Gastrocnemius medialis (tissue), 4 donors: ENCODE measurements at regions of chr12 and their contacts with region 1.

Region 1: DNA sequence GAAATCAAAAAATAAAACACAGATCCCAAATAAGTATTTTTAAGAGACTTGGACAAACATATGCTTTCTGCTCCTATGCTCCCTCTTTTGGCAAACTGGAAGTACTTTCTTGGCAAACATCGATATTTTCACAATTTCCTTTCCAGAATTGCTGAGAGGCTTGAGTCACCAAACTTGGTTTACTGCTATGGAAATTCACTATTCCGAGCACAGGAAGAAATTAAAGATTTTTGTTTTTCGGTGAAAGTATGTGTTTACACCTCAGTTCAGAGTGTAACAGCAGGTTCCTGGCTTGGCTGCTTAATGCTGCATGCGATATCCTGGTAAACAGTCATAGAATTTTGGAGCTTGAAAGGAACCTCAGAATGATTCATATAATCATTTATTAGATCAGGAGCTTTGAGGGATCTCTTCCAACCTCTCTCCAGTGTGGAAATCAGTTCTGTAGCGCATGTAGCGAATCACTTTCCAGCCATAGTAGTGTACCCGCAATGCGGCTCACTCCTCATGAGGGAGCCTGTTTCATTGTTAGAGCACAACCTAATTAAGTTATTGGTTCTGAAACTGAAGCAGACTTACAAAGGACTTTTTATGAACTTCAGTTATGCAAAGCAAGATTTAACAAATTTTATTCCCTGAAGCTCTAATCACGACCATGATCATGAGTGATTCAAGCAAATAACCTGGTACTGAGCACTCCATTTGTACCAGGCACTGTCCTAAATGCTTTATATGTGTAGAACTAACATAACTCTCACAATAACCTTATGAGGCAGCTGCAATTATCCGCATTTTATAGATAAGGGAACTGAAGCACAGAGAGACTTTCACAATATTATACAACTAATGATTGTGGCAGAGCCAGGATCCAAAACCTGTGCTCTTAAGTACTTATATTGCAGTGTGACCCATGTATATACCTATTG is 56.4 kb upstream of the ATP2A2 start:
- DNase-seq: peak; percentile 36 to 44
- ATAC-seq: peak; percentile 81 to 91
- H3K4me3 ChIP-seq: peak overlapping the region; percentile 4 to 34 (median 18)
- H3K27ac ChIP-seq: peak overlapping the region; percentile 75 to 82 (median 80)
- H3K4me1 ChIP-seq: peaks cover 25 to 41% of the 10 kb centered on the region in 2 donors
- H3K27me3 ChIP-seq: no peaks in the 10 kb centered on the region
- CTCF ChIP-seq: peak in 4 of 5 experiments; percentile 53 to 76 (median 62)
- POLR2A ChIP-seq: no peak

Region 2: GRCh38 chr12:110170535-110171185 is 54.0 kb before region 1 on chr12:
- in situ Hi-C with region 1: no loop called
- intact Hi-C with region 1: loop called (anchors 5 kb)
- DNase-seq: peak; percentile 40 to 59
- ATAC-seq: peak; percentile 97 to 98
- H3K4me3 ChIP-seq: no peak overlapping the region
- H3K27ac ChIP-seq: peak overlapping the region; percentile 73 to 82 (median 80)
- H3K4me1 ChIP-seq: peaks cover 30 to 37% of the 10 kb centered on the region in 2 donors
- H3K27me3 ChIP-seq: no peaks in the 10 kb centered on the region
- CTCF ChIP-seq: no peak
- POLR2A ChIP-seq: no peak

Region 3: GRCh38 chr12:110403146-110403975 is 178.7 kb after region 1 on chr12 and contains the start of gene ANAPC7:
- in situ Hi-C with region 1: no loop called
- intact Hi-C with region 1: no loop called
- DNase-seq: peak; percentile 81 to 90
- ATAC-seq: peak; percentile 96 to 97
- H3K4me3 ChIP-seq: peak within 1 kb of the TSS; percentile 76 to 98 (median 96)
- H3K27ac ChIP-seq: peak within 1 kb of the TSS; percentile 90 to 99 (median 92)
- H3K4me1 ChIP-seq: peaks cover 11 to 12% of the 10 kb centered on the region in 2 donors
- H3K27me3 ChIP-seq: no peaks in the 10 kb centered on the region
- CTCF ChIP-seq: no peak
- POLR2A ChIP-seq: peak; percentile 35 to 51
- total RNA-seq, gene ANAPC7: 27.5 to 57.1 (median 38.2) TPM